Activated T-helper 2 cell treated with anti-CD3 and anti-CD28 coated beads, Interferon-gamma antibody, Interleukin-2, Interleukin-4, amounts not matched to agents 10 μg/mL and 5 μg/mL and 100 μg/mL, durations not matched to agents 14 hours and 24 hours and 36 hours (primary cell): ENCODE measurements at regions of chr17 and their contacts with region 1.

Region 1: DNA sequence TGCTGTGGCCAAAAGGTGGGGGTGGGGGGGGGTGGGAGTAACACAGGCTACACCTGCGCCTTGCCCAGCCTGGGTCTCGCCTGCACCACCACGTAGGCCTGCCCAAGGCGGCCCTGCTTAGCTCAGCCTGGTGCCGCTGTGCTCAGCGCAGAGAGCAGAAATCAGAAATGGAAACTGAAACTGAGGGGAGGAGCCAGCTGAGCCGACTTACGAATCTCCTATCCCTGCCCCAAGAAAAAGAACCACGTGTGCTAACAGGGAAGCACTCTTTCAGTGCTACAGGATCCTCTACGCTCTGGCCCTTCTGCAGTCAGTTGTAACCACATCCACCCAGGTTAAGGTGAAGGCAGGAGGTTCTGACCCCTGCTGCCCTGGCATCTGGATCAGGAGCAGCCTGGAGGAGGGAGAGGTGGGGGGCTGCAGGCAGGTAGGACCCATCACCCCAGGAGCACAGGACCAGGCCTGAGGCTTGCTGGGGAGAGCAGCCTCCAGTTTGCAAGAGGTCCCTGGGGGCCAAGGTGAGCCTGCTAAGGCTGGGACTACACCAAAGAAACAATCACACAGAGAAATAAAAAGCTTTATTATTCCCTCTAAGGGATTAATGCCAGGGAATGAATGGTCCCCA is at the start of gene DHX58:
- DNase-seq: peak; percentile 84
- H3K4me3 Mint-ChIP-seq: peak within 1 kb of the TSS; percentile 91
- H3K27ac Mint-ChIP-seq: peak within 1 kb of the TSS; percentile 96
- H3K4me1 Mint-ChIP-seq: peaks cover 48% of the 10 kb centered on the region
- H3K27me3 Mint-ChIP-seq: no peaks in the 10 kb centered on the region
- total RNA-seq, gene DHX58: 15.3 and 20.3 TPM in 2 replicates

Region 2: DNA sequence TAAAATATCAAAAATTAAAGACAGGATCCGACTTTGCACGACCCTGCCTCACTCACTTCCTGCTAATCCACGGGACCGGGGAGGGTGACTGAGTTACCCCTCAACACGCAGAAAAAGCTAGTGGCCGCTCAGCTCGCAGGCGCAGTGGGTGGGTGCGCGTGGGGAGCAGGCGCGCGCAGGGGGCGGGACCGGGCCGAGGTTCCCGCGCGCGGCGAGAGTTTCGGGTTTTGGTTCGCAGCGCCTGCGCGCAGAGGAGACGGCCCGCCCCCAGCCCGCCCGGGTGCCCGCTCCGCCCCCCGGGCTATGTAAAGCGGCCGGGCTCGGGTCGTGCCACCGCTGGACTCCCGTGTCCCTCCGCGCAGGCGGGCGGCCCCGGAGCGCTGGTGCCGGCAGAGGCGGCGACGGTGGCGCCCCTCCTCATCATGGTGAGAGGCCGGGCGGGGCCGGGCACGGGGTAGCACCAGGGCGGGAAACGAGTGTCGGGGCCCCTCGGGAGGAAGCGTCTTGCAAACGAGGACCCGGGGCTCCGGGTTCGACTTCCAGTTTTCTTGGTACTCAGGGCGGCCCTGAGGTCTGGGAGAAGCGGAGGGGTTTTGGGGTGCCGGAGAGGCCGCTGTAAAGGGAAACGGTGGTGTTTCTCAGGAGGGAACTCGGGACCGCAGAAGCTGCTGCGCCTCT is 146.1 kb before region 1 on chr17 and contains the start of gene CNP:
- intact Hi-C with region 1: loop called (anchors 1 kb)
- DNase-seq: peak; percentile 86
- H3K4me3 Mint-ChIP-seq: peak within 1 kb of the TSS; percentile 80
- H3K27ac Mint-ChIP-seq: peak within 1 kb of the TSS; percentile 64
- H3K4me1 Mint-ChIP-seq: peaks cover 27% of the 10 kb centered on the region
- H3K27me3 Mint-ChIP-seq: peaks cover 2% of the 10 kb centered on the region
- total RNA-seq, gene CNP: 71.8 and 77.3 TPM in 2 replicates

Region 3: DNA sequence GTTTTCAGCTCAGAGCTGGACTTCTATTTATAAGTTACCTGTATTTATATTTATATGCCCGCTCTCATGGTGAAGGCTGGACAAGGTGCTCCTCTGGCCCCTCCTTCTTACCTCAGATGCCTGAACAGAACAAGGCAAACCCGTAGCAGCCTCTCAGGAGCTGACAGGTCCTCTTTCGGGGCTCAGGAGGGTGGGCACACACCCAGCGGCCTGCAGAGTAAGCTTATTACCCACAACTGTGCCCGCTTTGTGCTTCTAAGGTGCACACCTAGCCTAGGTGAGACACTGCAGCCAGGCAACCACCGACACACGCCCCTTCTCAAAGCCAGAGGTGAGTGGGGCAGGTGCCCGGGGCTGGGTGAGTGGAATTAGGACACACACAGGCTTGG is 87.5 kb before region 1 on chr17:
- intact Hi-C with region 1: loop called (anchors 1 kb)
- DNase-seq: no peak
- H3K4me3 Mint-ChIP-seq: no peak overlapping the region
- H3K27ac Mint-ChIP-seq: no peak overlapping the region
- H3K4me1 Mint-ChIP-seq: peaks cover 16% of the 10 kb centered on the region
- H3K27me3 Mint-ChIP-seq: no peaks in the 10 kb centered on the region

Region 4: DNA sequence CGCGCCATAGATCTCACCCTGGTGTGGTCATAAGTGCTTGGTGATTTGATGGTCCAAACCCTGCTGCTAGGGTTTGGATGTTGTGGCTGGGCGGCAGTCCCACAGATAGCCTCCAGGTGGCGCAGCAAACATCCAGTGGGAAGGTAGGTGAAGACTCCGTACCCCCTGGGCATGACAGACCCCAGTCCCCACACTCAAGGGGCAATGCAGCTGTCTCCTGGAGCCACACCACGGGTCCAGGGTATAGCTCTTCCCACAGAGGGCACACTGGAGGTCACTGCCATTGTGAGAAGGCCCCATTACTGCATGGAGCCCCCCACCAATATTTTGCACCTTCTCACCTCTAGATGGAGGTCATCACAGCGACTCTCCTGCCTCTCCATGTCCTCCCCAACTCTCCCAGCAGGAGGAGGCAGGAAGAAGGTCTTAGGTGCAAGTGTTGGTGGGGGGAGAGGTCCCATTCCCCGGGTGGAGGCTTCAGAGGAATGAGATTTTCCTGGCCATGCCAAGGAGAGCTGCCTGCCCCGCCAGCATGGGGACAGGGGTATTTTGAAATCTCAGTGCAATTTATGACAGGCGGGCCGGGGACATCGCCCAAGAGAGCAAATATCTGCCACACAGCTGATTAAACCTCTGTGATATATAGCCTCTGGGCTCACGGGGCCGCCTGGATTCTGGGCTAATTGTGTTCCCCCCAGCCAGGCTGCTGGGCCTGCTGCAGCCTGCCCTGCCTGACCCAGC is 45.1 kb before region 1 on chr17:
- intact Hi-C with region 1: loop called (anchors 1 kb)
- DNase-seq: peak; percentile 58
- H3K4me3 Mint-ChIP-seq: no peak overlapping the region
- H3K27ac Mint-ChIP-seq: no peak overlapping the region
- H3K4me1 Mint-ChIP-seq: peaks cover 12% of the 10 kb centered on the region
- H3K27me3 Mint-ChIP-seq: peaks cover 11% of the 10 kb centered on the region

Region 5: DNA sequence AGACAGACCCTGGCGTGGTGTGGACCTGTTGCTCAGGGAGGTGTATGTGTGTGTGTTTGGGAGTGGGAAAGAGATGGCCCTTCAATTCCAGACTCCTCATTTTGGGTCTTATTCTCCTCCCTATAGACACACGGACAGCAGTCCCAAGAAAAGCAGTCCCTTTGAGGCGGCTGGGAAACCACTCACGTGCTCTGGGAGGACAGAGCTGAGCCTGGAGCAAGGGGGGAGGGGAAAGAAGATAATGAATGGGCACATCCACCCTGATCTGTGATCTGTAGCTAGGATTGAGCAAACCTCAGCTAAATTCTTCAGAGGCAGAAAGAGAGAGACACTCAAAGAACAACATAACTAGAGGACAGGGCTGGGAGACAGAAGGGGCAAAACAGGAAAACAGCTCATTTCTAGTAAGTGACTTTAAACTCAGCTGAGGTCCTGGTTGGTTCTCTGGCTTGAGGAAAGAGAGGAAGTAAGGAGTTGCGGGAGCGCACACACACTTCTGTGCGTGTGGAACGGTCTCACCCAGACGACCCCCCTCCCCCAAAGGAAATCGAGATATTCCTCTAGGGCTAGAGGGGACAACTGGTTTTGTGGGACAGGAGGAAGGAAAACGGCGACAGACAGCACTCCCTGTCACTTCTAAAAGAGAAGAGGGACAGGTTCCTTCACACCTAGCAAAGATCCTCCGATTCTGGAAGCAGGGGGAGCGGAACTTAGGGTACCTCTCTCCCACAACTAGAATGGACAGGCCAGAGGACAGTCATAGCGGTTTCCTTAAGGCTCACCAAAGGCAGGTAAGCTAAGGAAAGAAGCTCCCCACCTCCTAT is 41.5 kb after region 1 on chr17:
- intact Hi-C with region 1: loop called (anchors 5 kb)
- DNase-seq: no peak
- H3K4me3 Mint-ChIP-seq: peak overlapping the region; percentile 92
- H3K27ac Mint-ChIP-seq: peak overlapping the region; percentile 77
- H3K4me1 Mint-ChIP-seq: peaks cover 22% of the 10 kb centered on the region
- H3K27me3 Mint-ChIP-seq: no peaks in the 10 kb centered on the region

Region 6: GRCh38 chr17:42183741-42184711 is 71.4 kb after region 1 on chr17:
- intact Hi-C with region 1: loop called (anchors 5 kb)
- DNase-seq: peak; percentile 77
- H3K4me3 Mint-ChIP-seq: peak overlapping the region; percentile 89
- H3K27ac Mint-ChIP-seq: peak overlapping the region; percentile 76
- H3K4me1 Mint-ChIP-seq: peaks cover 32% of the 10 kb centered on the region
- H3K27me3 Mint-ChIP-seq: peaks cover 23% of the 10 kb centered on the region